CD8-positive, alpha-beta T cell (primary cell): ENCODE measurements at regions of chr1 and their contacts with region 1.

Region 1: GRCh38 chr1:61851849-61852669 is 109.8 kb downstream of the PATJ start:
- DNase-seq: peak in 3 of 9 experiments; percentile 17 to 74 (median 67)
- ATAC-seq: peak; percentile 46
- H3K4me3 ChIP-seq: no peak overlapping the region
- H3K4me3 Mint-ChIP-seq: no peak overlapping the region
- H3K27ac ChIP-seq: no peak overlapping the region
- H3K27ac Mint-ChIP-seq: no peak overlapping the region
- H3K4me1 ChIP-seq: no peaks in the 10 kb centered on the region
- H3K4me1 Mint-ChIP-seq: no peaks in the 10 kb centered on the region
- H3K27me3 ChIP-seq: no peaks in the 10 kb centered on the region
- H3K27me3 Mint-ChIP-seq: no peaks in the 10 kb centered on the region
- CTCF ChIP-seq: peak; percentile 94

Region 2: DNA sequence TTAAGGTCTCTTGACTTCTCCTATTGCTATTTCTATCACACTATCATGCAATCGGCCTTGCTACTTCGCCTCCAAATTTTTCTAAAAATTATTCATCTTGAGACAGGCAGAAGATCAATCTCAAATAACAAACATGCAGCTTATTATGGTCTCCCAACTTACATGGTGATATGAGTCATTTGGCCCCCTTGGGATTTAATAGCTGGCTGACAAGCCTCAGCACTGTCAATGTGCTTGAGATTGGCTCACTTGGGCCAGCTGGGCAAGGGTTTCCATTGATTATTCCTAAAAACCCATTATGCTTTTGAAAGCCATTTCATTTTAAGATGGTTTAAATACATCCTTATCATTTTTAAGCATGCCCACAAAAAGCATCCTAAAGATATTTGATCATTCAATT is 994.2 kb before region 1 on chr1:
- CTCF ChIA-PET with region 1: no interaction called
- POLR2A ChIA-PET with region 1: no interaction called
- intact Hi-C with region 1: loop called in 1 of 2 experiments (anchors 10 kb)
- DNase-seq: no peak
- ATAC-seq: no peak
- H3K4me3 ChIP-seq: no peak overlapping the region
- H3K4me3 Mint-ChIP-seq: no peak overlapping the region
- H3K27ac ChIP-seq: no peak overlapping the region
- H3K27ac Mint-ChIP-seq: no peak overlapping the region
- H3K4me1 ChIP-seq: no peaks in the 10 kb centered on the region
- H3K4me1 Mint-ChIP-seq: no peaks in the 10 kb centered on the region
- H3K27me3 ChIP-seq: peaks cover 0 to 3% of the 10 kb centered on the region in 2 experiments
- H3K27me3 Mint-ChIP-seq: no peaks in the 10 kb centered on the region
- CTCF ChIP-seq: no peak

Region 3: GRCh38 chr1:60978421-60979357 is 873.4 kb before region 1 on chr1:
- CTCF ChIA-PET with region 1: interaction called, 5 read pairs
- POLR2A ChIA-PET with region 1: no interaction called
- intact Hi-C with region 1: loop called (anchors 1 to 2 kb)
- DNase-seq: peak in 6 of 9 experiments; percentile 24 to 59 (median 46)
- ATAC-seq: peak; percentile 63
- H3K4me3 ChIP-seq: no peak overlapping the region
- H3K4me3 Mint-ChIP-seq: no peak overlapping the region
- H3K27ac ChIP-seq: no peak overlapping the region
- H3K27ac Mint-ChIP-seq: no peak overlapping the region
- H3K4me1 ChIP-seq: no peaks in the 10 kb centered on the region
- H3K4me1 Mint-ChIP-seq: no peaks in the 10 kb centered on the region
- H3K27me3 ChIP-seq: no peaks in the 10 kb centered on the region
- H3K27me3 Mint-ChIP-seq: peaks cover 2% of the 10 kb centered on the region
- CTCF ChIP-seq: peak; percentile 36

Region 4: DNA sequence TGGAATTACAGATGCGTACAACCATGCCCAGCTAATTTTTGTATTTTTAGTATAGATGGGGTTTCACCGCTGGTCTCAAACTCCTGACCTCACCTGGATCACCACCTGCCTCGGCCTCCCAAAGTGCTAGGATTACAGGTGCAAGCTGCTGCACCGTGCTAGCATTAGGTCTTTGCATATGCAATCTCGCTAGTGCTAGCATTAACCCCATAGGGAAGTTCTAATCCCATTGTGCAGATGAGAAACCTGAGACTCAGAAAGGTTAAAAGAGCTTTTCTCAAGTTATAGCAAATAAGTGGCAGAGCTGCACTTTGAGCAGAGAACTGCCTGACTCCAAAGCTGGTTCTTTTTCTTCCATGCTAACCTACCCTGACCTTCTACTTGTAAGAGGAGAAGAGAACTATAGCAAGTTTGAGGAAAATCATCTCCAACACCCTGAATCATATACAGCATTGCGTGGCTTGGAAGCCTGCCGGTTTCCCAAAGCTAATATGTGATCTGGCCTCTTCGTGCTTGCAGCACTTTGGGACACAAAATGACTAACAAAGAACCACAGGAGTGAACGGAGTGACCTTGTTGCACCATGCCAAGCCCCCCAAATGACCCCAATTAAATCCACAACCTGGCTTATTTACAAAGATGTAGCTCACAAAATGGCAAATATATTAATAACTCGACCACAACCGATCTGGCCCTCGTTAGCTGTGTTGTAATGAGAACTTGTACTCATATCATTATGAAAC is 312.2 kb before region 1 on chr1:
- CTCF ChIA-PET with region 1: no interaction called
- POLR2A ChIA-PET with region 1: no interaction called
- intact Hi-C with region 1: loop called (anchors 5 kb)
- DNase-seq: no peak
- ATAC-seq: no peak
- H3K4me3 ChIP-seq: no peak overlapping the region
- H3K4me3 Mint-ChIP-seq: no peak overlapping the region
- H3K27ac ChIP-seq: no peak overlapping the region
- H3K27ac Mint-ChIP-seq: no peak overlapping the region
- H3K4me1 ChIP-seq: no peaks in the 10 kb centered on the region
- H3K4me1 Mint-ChIP-seq: peaks cover 27% of the 10 kb centered on the region
- H3K27me3 ChIP-seq: no peaks in the 10 kb centered on the region
- H3K27me3 Mint-ChIP-seq: no peaks in the 10 kb centered on the region
- CTCF ChIP-seq: no peak

Region 5: DNA sequence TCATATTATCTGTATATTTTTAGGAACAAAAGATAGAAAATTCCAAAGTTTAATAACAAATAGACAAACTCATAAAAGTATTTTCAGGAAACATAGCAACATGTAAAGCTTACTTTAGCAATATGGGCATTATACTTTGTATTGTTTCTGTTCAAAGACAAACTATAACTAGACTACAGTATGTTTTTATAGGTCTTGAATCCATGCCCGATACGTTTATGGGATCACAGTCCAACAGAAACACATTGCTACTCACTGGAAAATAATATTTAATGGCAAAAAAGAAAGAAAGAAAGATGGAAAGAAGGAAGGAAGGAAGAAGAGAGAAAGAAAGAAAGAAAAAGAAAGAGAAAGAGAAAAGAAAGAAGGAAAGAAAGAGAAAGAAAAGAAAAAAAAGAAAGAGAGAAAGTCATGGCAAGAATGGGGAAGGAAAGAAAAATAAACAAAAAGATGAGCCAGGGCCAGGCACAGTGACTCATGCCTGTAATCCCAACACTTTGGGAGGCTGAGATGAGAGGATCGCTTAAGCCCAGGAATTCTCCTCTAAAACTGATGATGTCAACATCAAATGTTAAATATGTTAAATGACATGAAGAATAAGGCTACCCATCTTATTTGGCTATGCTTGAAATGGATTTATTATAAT is 159.8 kb before region 1 on chr1:
- CTCF ChIA-PET with region 1: no interaction called
- POLR2A ChIA-PET with region 1: no interaction called
- intact Hi-C with region 1: loop called (anchors 5 to 10 kb)
- DNase-seq: no peak
- ATAC-seq: no peak
- H3K4me3 ChIP-seq: no peak overlapping the region
- H3K4me3 Mint-ChIP-seq: no peak overlapping the region
- H3K27ac ChIP-seq: no peak overlapping the region
- H3K27ac Mint-ChIP-seq: peak overlapping the region; percentile 49
- H3K4me1 ChIP-seq: no peaks in the 10 kb centered on the region
- H3K4me1 Mint-ChIP-seq: no peaks in the 10 kb centered on the region
- H3K27me3 ChIP-seq: no peaks in the 10 kb centered on the region
- H3K27me3 Mint-ChIP-seq: no peaks in the 10 kb centered on the region
- CTCF ChIP-seq: no peak

Region 6: GRCh38 chr1:61887076-61887867 is 35.2 kb after region 1 on chr1:
- CTCF ChIA-PET with region 1: no interaction called
- POLR2A ChIA-PET with region 1: no interaction called
- intact Hi-C with region 1: no loop called
- DNase-seq: no peak
- ATAC-seq: no peak
- H3K4me3 ChIP-seq: no peak overlapping the region
- H3K4me3 Mint-ChIP-seq: no peak overlapping the region
- H3K27ac ChIP-seq: no peak overlapping the region
- H3K27ac Mint-ChIP-seq: no peak overlapping the region
- H3K4me1 ChIP-seq: no peaks in the 10 kb centered on the region
- H3K4me1 Mint-ChIP-seq: no peaks in the 10 kb centered on the region
- H3K27me3 ChIP-seq: no peaks in the 10 kb centered on the region
- H3K27me3 Mint-ChIP-seq: no peaks in the 10 kb centered on the region
- CTCF ChIP-seq: no peak

Region 7: GRCh38 chr1:62337706-62338631 is 485.9 kb after region 1 on chr1:
- CTCF ChIA-PET with region 1: no interaction called
- POLR2A ChIA-PET with region 1: no interaction called
- intact Hi-C with region 1: no loop called
- DNase-seq: no peak
- ATAC-seq: no peak
- H3K4me3 ChIP-seq: no peak overlapping the region
- H3K4me3 Mint-ChIP-seq: no peak overlapping the region
- H3K27ac ChIP-seq: no peak overlapping the region
- H3K27ac Mint-ChIP-seq: no peak overlapping the region
- H3K4me1 ChIP-seq: no peaks in the 10 kb centered on the region
- H3K4me1 Mint-ChIP-seq: peaks cover 3% of the 10 kb centered on the region
- H3K27me3 ChIP-seq: no peaks in the 10 kb centered on the region
- H3K27me3 Mint-ChIP-seq: no peaks in the 10 kb centered on the region
- CTCF ChIP-seq: no peak